ENCODE measurements at regions of chr18 and their contacts with region 1.

Region 1: DNA sequence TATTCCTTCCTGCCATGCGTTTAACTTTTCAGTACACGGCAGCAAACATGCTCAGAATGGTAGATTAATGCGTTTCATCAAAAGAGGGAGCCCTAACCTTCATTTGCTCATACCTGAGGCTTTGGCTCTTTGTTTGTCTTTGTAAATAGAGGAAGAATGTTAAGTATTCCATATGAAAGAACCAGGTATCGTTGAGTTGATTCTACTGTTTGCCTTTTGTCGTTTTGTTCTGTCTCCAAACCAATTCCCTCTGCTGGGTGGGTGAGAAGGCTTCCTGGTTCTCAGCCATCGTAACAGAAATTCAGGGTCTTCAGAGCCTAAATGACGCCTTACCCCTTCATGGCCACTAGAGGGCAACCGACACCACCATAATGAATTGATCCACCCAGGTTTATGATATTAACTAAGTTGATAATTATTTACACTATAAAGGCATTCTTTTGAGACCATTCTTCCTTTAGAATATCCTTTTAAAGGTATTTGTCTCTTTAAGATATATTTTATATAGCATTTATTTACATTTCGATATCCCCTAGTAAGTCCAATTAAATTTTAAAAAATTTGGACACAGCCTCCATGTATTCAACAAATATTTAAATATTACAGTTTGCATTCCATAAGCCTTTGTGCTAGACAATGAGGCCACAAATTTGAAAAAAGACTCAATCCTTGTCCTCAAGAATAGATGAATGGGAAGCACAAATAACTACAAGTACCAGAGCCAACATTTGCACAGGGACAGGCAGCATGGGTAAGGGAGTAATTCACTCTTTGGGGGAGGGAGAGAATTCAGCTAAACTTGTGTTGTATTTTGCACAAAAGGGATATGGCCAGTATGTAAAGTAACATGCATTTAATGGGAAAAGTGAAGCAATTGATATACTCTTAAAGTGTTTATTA is 48.1 kb downstream of the TIMM21 start:
- DNase-seq: peak; percentile 59
- H3K4me3 Mint-ChIP-seq: peak overlapping the region; percentile 69
- H3K27ac Mint-ChIP-seq: peak overlapping the region; percentile 56
- H3K4me1 Mint-ChIP-seq: peaks cover 6% of the 10 kb centered on the region
- H3K27me3 Mint-ChIP-seq: peaks cover under 1% of the 10 kb centered on the region

Region 2: DNA sequence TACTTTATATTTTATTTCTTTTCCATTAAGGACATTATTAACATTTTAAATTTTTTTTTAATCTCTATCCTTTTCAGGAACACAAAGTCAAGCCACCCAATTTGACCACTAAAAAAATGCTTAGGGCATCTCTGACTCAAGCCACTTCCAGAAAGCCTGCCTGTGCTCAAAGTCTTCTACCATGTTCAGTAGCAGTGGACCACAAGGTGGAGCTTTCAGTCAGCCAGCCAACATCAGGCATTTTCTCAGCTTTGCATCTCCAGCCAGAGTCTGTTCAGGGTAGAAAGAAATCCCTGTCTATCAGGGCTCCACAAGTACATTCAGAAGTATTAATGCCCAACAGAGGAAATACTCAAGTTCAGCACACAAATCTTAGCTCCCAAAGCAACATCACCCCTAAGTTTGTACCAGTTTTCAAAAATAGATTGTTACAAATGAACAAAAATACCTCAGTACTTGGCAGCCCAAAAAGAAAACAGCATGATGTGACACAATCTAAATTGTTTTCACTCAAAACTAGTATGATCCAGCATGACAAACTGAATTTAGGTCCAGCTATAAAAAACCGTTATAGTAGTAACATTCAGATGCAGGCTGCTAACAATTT is 156.8 kb after region 1 on chr18:
- CTCF ChIA-PET with region 1: interaction called, 10 read pairs
- POLR2A ChIA-PET with region 1: no interaction called
- intact Hi-C with region 1: no loop called
- DNase-seq: peak; percentile 58
- H3K4me3 Mint-ChIP-seq: no peak overlapping the region
- H3K27ac Mint-ChIP-seq: no peak overlapping the region
- H3K4me1 Mint-ChIP-seq: peaks cover 6% of the 10 kb centered on the region
- H3K27me3 Mint-ChIP-seq: peaks cover 1% of the 10 kb centered on the region

Measured in activated CD4-positive, alpha-beta memory T cell treated with anti-CD3 and anti-CD28 coated beads for 36 hours (primary cell).